Naive thymus-derived CD4-positive, alpha-beta T cell (primary cell): ENCODE measurements at regions of chr6 and their contacts with region 1.

Region 1: DNA sequence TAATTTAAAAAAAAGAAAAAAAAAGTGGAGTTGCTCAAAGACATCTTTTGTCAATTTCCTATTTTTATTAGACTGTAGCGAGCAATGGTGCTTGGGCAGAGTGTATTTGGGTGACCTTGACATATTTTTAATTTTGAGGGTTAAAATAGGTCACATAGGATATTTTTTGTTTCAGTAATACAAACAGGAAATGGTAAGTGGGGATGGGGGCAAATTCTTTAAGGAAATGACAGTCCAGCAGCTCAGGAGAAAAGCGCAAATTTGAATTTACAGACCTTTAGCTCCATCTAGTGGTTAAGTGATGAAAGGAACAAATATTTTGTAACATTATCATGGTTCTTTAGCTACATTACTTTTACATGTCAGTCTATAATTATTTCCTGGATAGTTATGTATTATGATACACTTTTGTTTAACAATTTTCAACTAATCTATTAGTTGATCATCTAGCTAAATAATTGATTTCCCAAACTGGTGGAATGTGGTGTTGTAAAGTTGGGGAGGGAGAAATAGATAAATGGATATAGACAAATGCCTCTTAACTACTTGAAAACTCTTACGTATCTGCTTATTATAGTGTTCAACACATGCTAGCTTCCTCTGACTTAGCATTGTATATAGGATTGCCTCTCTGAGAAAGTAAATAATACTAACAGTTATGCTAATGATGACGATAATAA is 10.0 kb downstream of the CITED2 start:
- DNase-seq: peak in 6 of 9 donors; percentile 50 to 74 (median 64)
- ATAC-seq: peak; percentile 81
- H3K4me3 ChIP-seq: no peak overlapping the region
- H3K4me3 Mint-ChIP-seq: peak overlapping the region in 2 of 10 donors; percentile 22 to 34
- H3K27ac ChIP-seq: no peak overlapping the region
- H3K27ac Mint-ChIP-seq: peak overlapping the region; percentile 16 to 88 (median 37)
- H3K4me1 ChIP-seq: peaks cover 0 to 18% of the 10 kb centered on the region in 2 donors
- H3K4me1 Mint-ChIP-seq: peaks cover 17 to 67% (median 53%) of the 10 kb centered on the region in 7 donors
- H3K27me3 ChIP-seq: no peaks in the 10 kb centered on the region
- H3K27me3 Mint-ChIP-seq: peaks cover 0 to 2% (median 0%) of the 10 kb centered on the region in 5 donors

Region 2: DNA sequence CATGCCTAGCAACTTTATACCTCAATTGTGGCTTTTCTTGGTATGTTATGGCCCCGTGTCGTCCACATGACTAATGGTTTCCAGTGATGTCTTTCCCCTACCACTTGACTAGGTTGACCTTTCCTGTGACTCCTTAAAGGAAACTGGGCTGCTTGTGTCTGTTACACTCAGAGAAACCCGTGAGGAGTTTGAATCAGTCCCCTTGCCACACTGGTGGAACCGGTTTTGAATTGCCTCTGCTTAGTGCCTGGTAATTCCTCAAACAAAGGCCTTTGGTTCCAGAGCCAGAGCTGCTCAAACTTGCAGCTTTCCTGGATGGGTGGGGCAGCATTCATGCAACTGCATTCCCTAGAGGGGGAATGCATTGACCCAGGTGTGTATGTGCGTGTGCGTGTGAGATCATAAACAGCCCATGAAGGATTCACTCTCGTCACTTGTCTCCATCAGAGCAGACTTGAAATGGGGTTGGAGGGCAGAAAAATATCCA is 546.6 kb before region 1 on chr6:
- CTCF ChIA-PET with region 1: interaction called, 7 read pairs
- POLR2A ChIA-PET with region 1: no interaction called
- intact Hi-C with region 1: loop called (anchors 1 kb)
- DNase-seq: peak in 1 of 9 donors; percentile 28
- ATAC-seq: no peak
- H3K4me3 ChIP-seq: no peak overlapping the region
- H3K4me3 Mint-ChIP-seq: no peak overlapping the region
- H3K27ac ChIP-seq: no peak overlapping the region
- H3K27ac Mint-ChIP-seq: peak overlapping the region in 1 of 9 donors; percentile 21
- H3K4me1 ChIP-seq: no peaks in the 10 kb centered on the region
- H3K4me1 Mint-ChIP-seq: peaks cover 0 to 30% (median 0%) of the 10 kb centered on the region in 7 donors
- H3K27me3 ChIP-seq: no peaks in the 10 kb centered on the region
- H3K27me3 Mint-ChIP-seq: no peaks in the 10 kb centered on the region

Region 3: DNA sequence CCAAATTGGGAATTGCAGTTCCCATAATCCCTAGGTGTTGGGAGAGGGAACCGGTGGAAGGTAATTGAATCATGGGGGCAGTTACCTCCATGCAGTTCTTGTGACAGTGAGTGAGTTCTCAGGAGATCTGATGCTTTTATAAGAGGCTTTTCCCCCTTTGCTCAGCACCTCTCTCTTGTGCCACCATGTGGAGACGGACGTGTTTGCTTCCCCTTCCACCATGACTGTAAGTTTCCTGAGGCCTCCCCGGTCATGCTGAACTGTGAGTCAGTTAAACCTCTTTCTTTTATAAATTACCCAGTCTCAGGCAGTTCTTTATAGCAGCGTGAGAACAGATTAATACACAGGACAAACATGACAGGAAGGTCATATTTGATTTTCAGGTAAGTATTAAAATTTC is 254.9 kb before region 1 on chr6:
- CTCF ChIA-PET with region 1: interaction called, 10 read pairs
- POLR2A ChIA-PET with region 1: interaction called, 4 read pairs
- intact Hi-C with region 1: no loop called
- DNase-seq: peak in 2 of 9 donors; percentile 21 to 28
- ATAC-seq: no peak
- H3K4me3 ChIP-seq: no peak overlapping the region
- H3K4me3 Mint-ChIP-seq: peak overlapping the region in 2 of 10 donors; percentile 6 to 36
- H3K27ac ChIP-seq: no peak overlapping the region
- H3K27ac Mint-ChIP-seq: peak overlapping the region in 8 of 9 donors; percentile 38 to 94 (median 86)
- H3K4me1 ChIP-seq: peaks cover 36 to 48% of the 10 kb centered on the region in 2 donors
- H3K4me1 Mint-ChIP-seq: peaks cover 17 to 74% (median 59%) of the 10 kb centered on the region in 7 donors
- H3K27me3 ChIP-seq: no peaks in the 10 kb centered on the region
- H3K27me3 Mint-ChIP-seq: no peaks in the 10 kb centered on the region

Region 4: DNA sequence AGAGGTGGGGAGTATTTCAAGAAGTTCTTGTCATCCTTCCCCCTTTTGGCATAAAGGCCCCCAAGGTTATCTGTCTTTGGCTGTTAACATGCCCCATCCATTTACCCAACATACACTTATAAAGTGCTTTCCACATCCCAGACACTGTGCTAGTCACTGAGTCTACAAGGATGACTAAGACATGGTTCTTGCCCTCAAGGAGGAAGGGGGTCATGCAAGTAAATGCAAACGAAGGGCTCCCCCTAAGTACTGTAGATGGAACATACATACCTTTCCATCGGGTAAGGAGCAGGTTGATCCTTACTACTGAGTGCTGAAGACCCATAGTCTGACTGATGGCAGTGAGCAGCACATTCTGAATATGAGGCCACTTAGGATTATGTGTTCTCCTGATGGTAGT is 191.3 kb before region 1 on chr6:
- CTCF ChIA-PET with region 1: interaction called, 6 read pairs
- POLR2A ChIA-PET with region 1: interaction called, 4 read pairs
- intact Hi-C with region 1: loop called in 1 of 2 experiments (anchors 2 kb)
- DNase-seq: peak in 6 of 9 donors; percentile 31 to 54 (median 40)
- ATAC-seq: peak; percentile 69
- H3K4me3 ChIP-seq: no peak overlapping the region
- H3K4me3 Mint-ChIP-seq: peak overlapping the region; percentile 16 to 75 (median 60)
- H3K27ac ChIP-seq: peak overlapping the region; percentile 49
- H3K27ac Mint-ChIP-seq: peak overlapping the region; percentile 64 to 88 (median 83)
- H3K4me1 ChIP-seq: peaks cover 50 to 85% of the 10 kb centered on the region in 2 donors
- H3K4me1 Mint-ChIP-seq: peaks cover 70 to 95% (median 92%) of the 10 kb centered on the region in 7 donors
- H3K27me3 ChIP-seq: no peaks in the 10 kb centered on the region
- H3K27me3 Mint-ChIP-seq: no peaks in the 10 kb centered on the region

Region 5: DNA sequence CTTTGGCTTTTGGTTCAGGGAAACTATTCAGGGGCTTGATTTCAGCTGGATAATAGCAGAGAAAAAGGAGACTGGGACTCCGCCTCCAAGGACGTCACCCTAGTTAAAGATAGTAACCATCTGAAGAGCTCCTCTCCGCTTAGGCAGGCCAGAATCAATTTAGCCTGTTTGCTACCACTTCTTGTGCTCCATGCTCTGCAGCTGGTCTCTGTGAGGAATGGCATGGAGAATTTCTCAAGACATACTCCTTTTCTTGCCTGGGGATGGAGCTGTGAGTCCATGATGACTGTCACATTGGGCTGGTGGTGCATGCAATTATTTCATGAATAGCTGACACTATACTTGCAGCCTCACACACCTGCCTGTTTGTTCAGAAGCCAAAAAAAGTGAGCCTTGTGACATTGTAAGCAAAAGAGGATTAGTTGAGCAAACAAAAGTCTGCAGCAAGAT is 134.0 kb before region 1 on chr6:
- CTCF ChIA-PET with region 1: interaction called, 12 read pairs
- POLR2A ChIA-PET with region 1: interaction called, 5 read pairs
- intact Hi-C with region 1: loop called in 1 of 2 experiments (anchors 1 kb)
- DNase-seq: peak in 4 of 9 donors; percentile 8 to 28 (median 20)
- ATAC-seq: no peak
- H3K4me3 ChIP-seq: no peak overlapping the region
- H3K4me3 Mint-ChIP-seq: no peak overlapping the region
- H3K27ac ChIP-seq: no peak overlapping the region
- H3K27ac Mint-ChIP-seq: peak overlapping the region in 5 of 9 donors; percentile 2 to 44 (median 23)
- H3K4me1 ChIP-seq: no peaks in the 10 kb centered on the region
- H3K4me1 Mint-ChIP-seq: peaks cover 4 to 15% (median 10%) of the 10 kb centered on the region in 7 donors
- H3K27me3 ChIP-seq: no peaks in the 10 kb centered on the region
- H3K27me3 Mint-ChIP-seq: no peaks in the 10 kb centered on the region

Region 6: DNA sequence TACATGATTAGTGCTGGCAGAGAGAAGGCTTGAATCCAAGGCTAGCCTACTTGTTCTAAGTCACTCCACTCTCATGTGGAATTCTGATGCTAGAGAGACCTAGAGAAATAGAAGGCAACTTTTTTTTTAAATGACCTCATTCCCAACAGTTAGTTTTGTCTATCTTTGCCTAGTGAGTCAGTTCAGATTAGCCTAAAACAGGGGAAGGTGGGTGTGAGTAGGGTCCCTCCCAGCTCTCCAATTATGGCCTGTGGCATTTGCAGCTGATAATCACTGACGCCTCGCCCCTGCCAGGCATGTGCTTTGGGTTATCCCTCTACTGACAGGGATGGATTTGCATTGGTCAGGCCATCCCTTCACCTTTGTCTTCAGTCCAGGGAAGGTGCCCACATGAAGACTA is 86.3 kb before region 1 on chr6:
- CTCF ChIA-PET with region 1: interaction called, 3 read pairs
- POLR2A ChIA-PET with region 1: no interaction called
- intact Hi-C with region 1: loop called in 1 of 2 experiments (anchors 1 kb)
- DNase-seq: no peak
- ATAC-seq: no peak
- H3K4me3 ChIP-seq: no peak overlapping the region
- H3K4me3 Mint-ChIP-seq: no peak overlapping the region
- H3K27ac ChIP-seq: no peak overlapping the region
- H3K27ac Mint-ChIP-seq: peak overlapping the region in 6 of 9 donors; percentile 12 to 80 (median 58)
- H3K4me1 ChIP-seq: peaks cover 5 to 10% of the 10 kb centered on the region in 2 donors
- H3K4me1 Mint-ChIP-seq: peaks cover 11 to 53% (median 32%) of the 10 kb centered on the region in 7 donors
- H3K27me3 ChIP-seq: no peaks in the 10 kb centered on the region
- H3K27me3 Mint-ChIP-seq: no peaks in the 10 kb centered on the region

Region 7: GRCh38 chr6:139482287-139482686 is 117.8 kb after region 1 on chr6:
- CTCF ChIA-PET with region 1: no interaction called
- POLR2A ChIA-PET with region 1: no interaction called
- intact Hi-C with region 1: no loop called
- DNase-seq: no peak
- ATAC-seq: no peak
- H3K4me3 ChIP-seq: no peak overlapping the region
- H3K4me3 Mint-ChIP-seq: no peak overlapping the region
- H3K27ac ChIP-seq: no peak overlapping the region
- H3K27ac Mint-ChIP-seq: no peak overlapping the region
- H3K4me1 ChIP-seq: no peaks in the 10 kb centered on the region
- H3K4me1 Mint-ChIP-seq: peaks cover 0 to 1% (median 0%) of the 10 kb centered on the region in 7 donors
- H3K27me3 ChIP-seq: no peaks in the 10 kb centered on the region
- H3K27me3 Mint-ChIP-seq: peaks cover 0 to 10% (median 8%) of the 10 kb centered on the region in 5 donors

Region 8: GRCh38 chr6:140401761-140402160 is 1037.3 kb after region 1 on chr6:
- CTCF ChIA-PET with region 1: no interaction called
- POLR2A ChIA-PET with region 1: no interaction called
- intact Hi-C with region 1: no loop called
- DNase-seq: no peak
- ATAC-seq: no peak
- H3K4me3 ChIP-seq: no peak overlapping the region
- H3K4me3 Mint-ChIP-seq: no peak overlapping the region
- H3K27ac ChIP-seq: no peak overlapping the region
- H3K27ac Mint-ChIP-seq: no peak overlapping the region
- H3K4me1 ChIP-seq: no peaks in the 10 kb centered on the region
- H3K4me1 Mint-ChIP-seq: no peaks in the 10 kb centered on the region
- H3K27me3 ChIP-seq: no peaks in the 10 kb centered on the region
- H3K27me3 Mint-ChIP-seq: peaks cover 0 to 5% (median 0%) of the 10 kb centered on the region in 5 donors